Cardiac septum (tissue), 1 donor: ENCODE measurements at regions of chr12 and their contacts with region 1.

Region 1: GRCh38 chr12:49232940-49233841 is 31.7 kb upstream of the TUBA1C start:
- DNase-seq: peak; percentile 83

Region 2: DNA sequence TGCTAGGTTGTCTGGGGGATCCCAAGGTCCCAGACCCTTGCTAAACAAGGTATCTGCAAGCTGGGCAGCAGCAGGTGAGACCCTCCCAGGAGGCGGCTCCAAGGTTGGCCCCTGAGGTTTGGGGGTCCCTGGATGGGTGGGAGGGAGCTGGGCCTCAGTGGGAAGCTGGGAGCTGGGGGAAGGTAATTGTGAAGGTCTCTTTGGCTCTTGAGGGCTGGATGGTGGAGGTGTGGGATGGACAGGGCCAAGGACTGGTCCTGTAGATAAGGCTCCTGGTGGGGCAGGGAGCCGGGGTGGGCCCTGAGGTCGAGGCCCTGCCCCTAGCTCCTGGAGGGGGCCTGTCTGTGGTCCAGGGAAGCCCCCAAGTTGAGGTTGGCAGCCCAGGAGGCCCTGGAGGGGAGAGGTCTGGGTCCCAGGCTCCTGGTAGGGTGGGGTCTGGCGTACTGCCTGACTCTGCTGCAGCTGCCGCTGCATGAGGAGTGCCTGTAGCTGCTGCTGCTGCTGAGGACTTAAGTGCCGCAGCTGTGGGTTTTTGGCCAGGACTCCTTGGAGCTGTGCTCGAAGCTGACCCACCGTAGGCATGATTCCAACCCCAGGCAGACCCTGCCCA is 201.5 kb before region 1 on chr12:
- intact Hi-C with region 1: no loop called
- DNase-seq: no peak

Region 3: GRCh38 chr12:49060237-49061156 is 172.7 kb before region 1 on chr12 and contains the start of gene KMT2D:
- intact Hi-C with region 1: loop called (anchors 2 kb)
- DNase-seq: peak; percentile 96
- total RNA-seq, gene KMT2D: 63.8 TPM

Region 4: GRCh38 chr12:49088190-49088931 is 144.8 kb before region 1 on chr12:
- intact Hi-C with region 1: loop called (anchors 2 kb)
- DNase-seq: peak; percentile 89

Region 5: DNA sequence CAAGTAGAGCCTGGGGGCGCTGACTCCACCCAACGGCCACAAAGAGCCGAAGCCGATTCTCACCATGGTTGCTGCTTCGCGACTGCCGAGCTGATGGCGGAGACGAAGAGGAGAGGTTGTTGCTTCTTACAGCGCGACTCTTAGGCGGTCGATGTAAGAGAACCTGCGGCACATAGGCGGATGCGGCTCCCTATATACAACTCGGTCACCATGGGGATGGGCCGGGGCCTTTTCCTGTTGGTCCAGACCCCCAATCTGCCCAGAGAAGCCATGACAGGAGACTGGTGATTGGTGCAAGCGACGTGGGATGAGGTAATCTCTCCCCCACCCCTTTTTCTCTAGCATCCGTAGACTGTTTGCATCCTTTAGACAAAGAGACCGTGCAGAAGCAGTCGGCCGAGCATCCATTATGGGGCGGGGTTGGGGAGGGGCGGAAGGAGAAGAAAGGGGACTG is 44.2 kb before region 1 on chr12 and contains the start of gene TUBA1A:
- intact Hi-C with region 1: loop called (anchors 1 kb)
- DNase-seq: peak; percentile 97
- total RNA-seq, gene TUBA1A: 250 TPM

Region 6: GRCh38 chr12:49219417-49220026 is 13.7 kb before region 1 on chr12:
- intact Hi-C with region 1: loop called (anchors 2 kb)
- DNase-seq: no peak

Region 7: DNA sequence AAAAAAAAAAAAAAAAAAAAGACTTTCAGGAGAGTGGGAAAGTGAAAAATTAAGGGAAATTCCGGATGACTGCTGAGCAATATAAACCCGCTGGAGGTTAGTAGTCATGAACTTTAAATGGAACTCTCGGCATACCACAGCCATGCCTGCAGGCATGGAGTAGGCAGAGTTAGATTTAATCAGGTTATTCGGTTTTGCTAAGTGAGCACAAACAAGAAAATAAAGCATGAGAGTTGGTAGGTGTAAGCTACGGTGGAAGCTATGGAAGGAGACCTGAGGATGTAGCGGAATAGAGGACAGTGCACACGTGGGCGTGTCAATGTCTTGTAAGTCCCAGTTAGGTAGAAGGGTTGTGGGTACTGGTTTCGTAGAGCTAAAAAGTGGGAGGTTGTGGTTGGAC is 19.9 kb after region 1 on chr12:
- intact Hi-C with region 1: no loop called
- DNase-seq: no peak